ENCODE measurements at regions of chr3 and their contacts with region 1.

Region 1: GRCh38 chr3:184250167-184250828 is 826 bp downstream of the EEF1AKMT4 start:
- DNase-seq: peak; percentile 85
- H3K4me3 ChIP-seq: peak overlapping the region; percentile 94 to 97
- H3K27ac ChIP-seq: peak overlapping the region; percentile 52 to 77
- H3K4me1 ChIP-seq: peaks cover 0 to 3% of the 10 kb centered on the region in 2 experiments; a peak in 2 of 4 replicates
- H3K27me3 ChIP-seq: no peaks in the 10 kb centered on the region
- CTCF ChIP-seq: peak; percentile 89
- EP300 ChIP-seq: no peak
- RAD21 ChIP-seq: peak; percentile 79

Region 2: DNA sequence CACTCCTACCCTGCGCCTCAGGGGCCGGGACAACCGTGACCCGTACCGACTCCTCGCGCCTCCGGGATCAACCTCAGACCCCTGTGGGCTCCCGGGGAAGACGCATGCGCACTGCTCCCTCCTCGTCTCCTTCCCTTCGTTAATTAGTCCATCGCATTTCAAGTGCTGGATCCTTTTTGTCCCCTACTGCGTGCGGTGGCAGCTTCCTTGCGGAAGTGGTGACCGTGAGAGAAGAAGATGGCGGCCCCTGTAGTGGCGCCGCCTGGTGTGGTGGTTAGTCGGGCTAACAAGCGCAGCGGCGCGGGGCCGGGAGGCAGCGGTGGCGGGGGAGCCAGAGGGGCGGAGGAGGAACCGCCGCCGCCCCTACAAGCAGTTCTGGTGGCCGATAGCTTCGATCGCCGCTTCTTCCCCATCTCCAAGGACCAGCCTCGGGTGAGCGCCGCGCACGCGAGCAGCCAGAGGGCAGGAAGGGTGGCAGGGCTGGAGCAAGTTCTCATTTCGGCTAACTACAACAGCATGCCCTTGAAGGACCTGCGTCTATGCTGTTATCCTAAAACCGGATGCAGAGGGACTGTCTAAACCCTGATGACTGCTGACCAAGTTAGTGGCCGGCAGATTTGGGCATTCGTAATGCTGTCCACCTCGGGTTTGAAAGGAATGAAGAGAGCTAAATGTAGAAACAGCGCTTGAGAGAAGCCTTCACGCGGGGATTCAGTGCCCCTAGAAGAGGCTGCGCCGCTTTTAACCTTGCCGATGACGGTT is 115.0 kb before region 1 on chr3 and contains the start of gene EIF2B5:
- CTCF ChIA-PET with region 1: interaction called, 17 read pairs
- POLR2A ChIA-PET with region 1: interaction called, 3 read pairs
- DNase-seq: peak; percentile 93
- H3K4me3 ChIP-seq: peak within 1 kb of the TSS; percentile 82 to 96
- H3K27ac ChIP-seq: peak within 1 kb of the TSS; percentile 70 to 86
- H3K4me1 ChIP-seq: peaks cover 0 to 8% of the 10 kb centered on the region in 2 experiments; a peak in 3 of 4 replicates
- H3K27me3 ChIP-seq: no peaks in the 10 kb centered on the region
- CTCF ChIP-seq: peak; percentile 56
- EP300 ChIP-seq: no peak
- RAD21 ChIP-seq: peak; percentile 13
- polyA plus RNA-seq, gene EIF2B5: 46.8 and 61.5 TPM in 2 replicates

Region 3: DNA sequence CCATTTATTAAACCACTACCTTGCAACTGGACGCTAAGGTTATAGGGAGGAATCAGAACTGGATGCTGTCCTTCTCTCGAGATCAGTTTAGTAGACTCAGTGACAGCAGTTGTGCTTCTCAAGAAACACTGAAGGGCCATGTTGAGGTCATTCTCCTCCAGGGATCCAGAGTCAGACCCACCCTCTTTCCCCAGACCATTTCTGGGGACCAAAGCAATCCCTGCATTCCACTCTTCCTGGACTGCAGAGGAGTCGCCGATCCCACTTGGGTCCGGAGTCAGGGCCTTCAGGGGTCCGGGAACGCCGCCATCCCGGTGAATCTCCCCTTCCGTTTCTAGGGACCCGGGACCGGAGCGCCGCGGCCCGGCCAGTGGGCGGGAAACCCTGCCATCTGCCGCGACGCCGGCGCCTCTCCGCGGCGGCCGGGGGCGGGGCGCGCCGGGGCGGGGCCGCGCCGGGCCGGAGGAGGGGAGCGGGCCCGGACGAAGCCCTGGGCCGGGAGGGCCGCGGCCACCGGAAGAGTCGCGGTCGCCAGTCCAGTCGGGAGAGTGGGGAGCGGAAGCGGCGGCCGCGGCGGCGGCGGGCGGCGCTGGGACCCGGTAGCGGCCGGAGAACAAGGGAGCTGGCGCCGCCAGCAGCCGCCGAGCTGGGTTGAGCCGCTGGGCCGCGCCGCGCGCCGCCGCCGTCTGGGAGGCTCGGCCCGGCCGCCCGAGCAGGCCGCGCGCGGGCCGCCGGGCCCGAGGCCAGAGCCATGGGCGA is 95.2 kb before region 1 on chr3 and contains the start of gene DVL3:
- CTCF ChIA-PET with region 1: interaction called, 13 read pairs
- POLR2A ChIA-PET with region 1: no interaction called
- DNase-seq: peak; percentile 97
- H3K4me3 ChIP-seq: peak within 1 kb of the TSS; percentile 80 to 95
- H3K27ac ChIP-seq: peak within 1 kb of the TSS; percentile 82 to 93
- H3K4me1 ChIP-seq: peaks cover 11 to 12% of the 10 kb centered on the region in 2 experiments; a peak in 3 of 4 replicates
- H3K27me3 ChIP-seq: no peaks in the 10 kb centered on the region
- CTCF ChIP-seq: no peak
- EP300 ChIP-seq: peak in 1 of 2 experiments; percentile 44; a peak in 1 of 4 replicates
- RAD21 ChIP-seq: no peak
- polyA plus RNA-seq, gene DVL3: 29.6 and 30.1 TPM in 2 replicates

Region 4: GRCh38 chr3:184185461-184186308 is 64.6 kb before region 1 on chr3 and contains the start of gene ABCF3:
- CTCF ChIA-PET with region 1: interaction called, 11 read pairs
- POLR2A ChIA-PET with region 1: interaction called, 4 read pairs
- DNase-seq: peak; percentile 97
- H3K4me3 ChIP-seq: peak within 1 kb of the TSS; percentile 99 to 100
- H3K27ac ChIP-seq: peak within 1 kb of the TSS; percentile 84 to 96
- H3K4me1 ChIP-seq: peaks cover 6 to 20% of the 10 kb centered on the region in 2 experiments; a peak in 3 of 4 replicates
- H3K27me3 ChIP-seq: no peaks in the 10 kb centered on the region
- CTCF ChIP-seq: no peak
- EP300 ChIP-seq: peak in 1 of 2 experiments; percentile 8; a peak in 1 of 4 replicates
- RAD21 ChIP-seq: 0 out of 2 replicates have a peak, but pooled peaks have one; percentile 32
- polyA plus RNA-seq, gene ABCF3: 55.6 and 59.2 TPM in 2 replicates

Region 5: GRCh38 chr3:184229394-184230080 is 20.8 kb before region 1 on chr3 and contains the start of gene VWA5B2:
- CTCF ChIA-PET with region 1: interaction called, 29 read pairs
- POLR2A ChIA-PET with region 1: no interaction called
- DNase-seq: peak; percentile 99
- H3K4me3 ChIP-seq: peak within 1 kb of the TSS; percentile 50 to 64
- H3K27ac ChIP-seq: no peak within 1 kb of the TSS
- H3K4me1 ChIP-seq: peaks cover 0 to 26% of the 10 kb centered on the region in 2 experiments; a peak in 2 of 4 replicates
- H3K27me3 ChIP-seq: peaks cover 27% of the 10 kb centered on the region
- CTCF ChIP-seq: peak; percentile 21; the same call in 1 of the 2 replicates
- EP300 ChIP-seq: no peak
- RAD21 ChIP-seq: 0 out of 2 replicates have a peak, but pooled peaks have one; percentile 16
- polyA plus RNA-seq, gene VWA5B2: 0.08 and 0.19 TPM in 2 replicates

Region 6: DNA sequence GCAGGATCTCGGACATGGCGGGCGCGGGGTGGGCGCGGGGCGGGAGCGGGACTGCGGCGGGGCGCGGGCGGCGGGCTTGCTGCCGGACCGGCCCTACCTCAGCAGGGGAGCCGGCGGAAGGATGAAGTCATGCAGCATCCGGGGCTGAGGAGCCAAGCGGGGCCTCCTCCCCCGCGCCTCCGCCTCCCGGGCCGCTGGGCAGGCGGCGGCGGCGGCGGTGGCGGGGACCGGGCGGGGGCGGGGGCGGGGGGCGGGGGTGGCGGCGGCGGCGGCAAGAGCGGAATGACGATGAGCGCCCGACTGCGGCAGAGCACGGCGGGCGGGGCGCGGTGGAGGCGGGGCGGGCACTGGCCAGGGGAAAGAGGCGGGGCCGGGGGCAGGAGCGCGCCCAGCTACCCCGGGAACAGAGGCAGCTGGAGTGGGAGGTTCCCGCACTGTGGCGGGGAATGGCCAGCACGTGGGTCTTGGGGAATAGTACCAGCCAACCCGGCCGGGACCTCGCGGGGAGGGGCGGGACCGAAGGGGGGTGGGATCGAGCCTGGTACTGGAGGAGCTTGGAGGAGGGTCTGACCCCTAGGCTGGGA is 11.1 kb after region 1 on chr3 and contains the start of gene CAMK2N2:
- CTCF ChIA-PET with region 1: interaction called, 25 read pairs
- POLR2A ChIA-PET with region 1: no interaction called
- DNase-seq: peak; percentile 98
- H3K4me3 ChIP-seq: peak within 1 kb of the TSS; percentile 54 to 80
- H3K27ac ChIP-seq: peak within 1 kb of the TSS; percentile 28 to 50; a peak in 2 of 4 replicates
- H3K4me1 ChIP-seq: peaks cover 0 to 22% of the 10 kb centered on the region in 2 experiments; a peak in 1 of 4 replicates
- H3K27me3 ChIP-seq: no peaks in the 10 kb centered on the region
- CTCF ChIP-seq: no peak
- EP300 ChIP-seq: no peak
- RAD21 ChIP-seq: no peak
- polyA plus RNA-seq, gene CAMK2N2: 0.89 and 2.2 TPM in 2 replicates

Region 7: DNA sequence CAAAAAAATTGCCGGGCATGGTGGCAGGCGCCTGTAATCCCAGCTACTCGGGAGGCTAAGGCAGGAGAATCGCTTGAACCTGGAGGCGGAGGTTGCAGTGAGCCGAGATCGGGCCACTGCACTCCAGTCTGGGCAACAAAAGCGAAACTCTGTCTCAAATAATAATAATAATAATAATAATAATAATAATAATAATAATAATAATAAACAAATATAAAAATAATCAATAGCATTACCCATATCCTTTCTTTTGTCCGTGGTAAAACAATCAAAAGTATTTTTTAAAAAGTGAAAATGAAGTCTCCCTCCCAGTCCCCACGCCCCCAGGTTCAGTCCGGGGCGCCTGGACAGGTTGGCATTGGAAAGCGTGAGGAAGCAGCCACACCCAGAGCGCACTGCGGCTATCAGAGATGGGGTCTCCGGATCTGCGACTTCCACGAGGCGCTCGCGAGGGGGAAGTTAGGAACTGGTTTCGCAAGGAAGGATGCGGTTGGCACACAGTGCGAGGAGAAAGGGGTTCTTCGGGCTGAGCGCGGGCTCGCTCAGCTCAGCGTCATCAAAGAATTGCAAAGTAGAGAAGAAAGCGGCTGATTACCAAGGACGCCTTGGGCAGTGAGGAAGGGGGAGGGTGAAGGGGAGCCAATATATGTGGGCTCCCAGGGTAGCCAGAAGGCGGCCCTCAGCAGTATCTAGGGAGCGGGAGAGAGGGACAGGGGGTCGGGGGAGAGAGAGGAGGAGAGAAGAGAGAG is 241.7 kb after region 1 on chr3:
- CTCF ChIA-PET with region 1: no interaction called
- POLR2A ChIA-PET with region 1: no interaction called
- DNase-seq: no peak
- H3K4me3 ChIP-seq: no peak overlapping the region
- H3K27ac ChIP-seq: no peak overlapping the region
- H3K4me1 ChIP-seq: no peaks in the 10 kb centered on the region
- H3K27me3 ChIP-seq: peaks cover 70% of the 10 kb centered on the region
- CTCF ChIP-seq: no peak
- EP300 ChIP-seq: no peak
- RAD21 ChIP-seq: no peak